ENCODE measurements at regions of chr1 and their contacts with region 1.

Region 1: DNA sequence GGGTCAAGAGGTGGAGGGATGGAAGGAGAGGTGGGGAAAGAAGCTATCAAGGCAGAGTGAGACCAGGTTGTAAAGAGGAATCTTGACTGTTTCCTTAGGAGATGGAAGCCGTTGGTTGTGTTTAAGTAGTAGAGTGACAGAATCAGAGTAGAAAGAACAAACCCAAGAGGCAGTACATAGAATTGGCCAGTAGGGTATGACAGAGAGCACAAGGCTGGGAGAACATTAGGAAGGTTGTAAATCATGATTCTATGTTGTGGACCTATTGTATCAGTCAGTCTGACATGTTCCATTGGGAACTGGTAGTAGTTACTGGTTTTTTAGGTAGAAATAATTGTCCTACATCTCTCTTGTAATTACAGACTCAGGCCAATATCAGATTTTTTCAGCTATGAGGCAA is 486.9 kb upstream of the USP24 start:
- DNase-seq: peak; percentile 44
- H3K4me3 ChIP-seq: no peak overlapping the region
- H3K27ac ChIP-seq: no peak overlapping the region
- H3K4me1 ChIP-seq: peaks cover 39% of the 10 kb centered on the region
- H3K27me3 ChIP-seq: no peaks in the 10 kb centered on the region

Region 2: DNA sequence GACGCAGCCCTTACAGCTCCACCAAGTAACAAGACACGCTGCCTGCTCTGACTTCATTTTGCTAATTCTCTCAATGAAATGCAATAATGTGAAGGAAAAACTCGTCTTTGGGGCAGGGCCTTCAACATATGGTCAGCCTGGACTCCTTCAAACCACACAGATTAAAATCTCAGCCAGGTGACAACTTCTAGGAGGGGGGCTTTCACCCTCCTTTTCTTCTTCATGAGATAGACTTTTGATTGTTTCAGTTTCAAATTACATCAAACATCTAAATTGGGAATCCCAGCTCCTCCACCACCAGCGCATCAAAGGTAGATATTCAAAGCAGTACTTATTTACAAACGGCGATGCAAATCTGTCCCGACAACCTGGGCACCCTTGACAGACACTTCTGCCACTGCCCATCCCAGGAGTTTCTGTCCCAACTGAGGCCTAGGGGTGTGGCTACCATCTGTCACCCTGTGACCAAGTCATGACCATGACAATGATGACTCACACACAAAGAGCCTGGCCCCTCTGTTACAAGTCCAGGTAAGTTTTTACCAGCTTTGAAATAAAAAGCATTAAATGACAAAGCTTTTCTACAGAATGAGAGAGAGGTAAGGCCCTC is 1325.5 kb before region 1 on chr1:
- in situ Hi-C with region 1: no loop called
- DNase-seq: no peak
- H3K4me3 ChIP-seq: no peak overlapping the region
- H3K27ac ChIP-seq: no peak overlapping the region
- H3K4me1 ChIP-seq: peaks cover 7% of the 10 kb centered on the region; the same call in 1 of the 2 replicates
- H3K27me3 ChIP-seq: no peaks in the 10 kb centered on the region

Region 3: DNA sequence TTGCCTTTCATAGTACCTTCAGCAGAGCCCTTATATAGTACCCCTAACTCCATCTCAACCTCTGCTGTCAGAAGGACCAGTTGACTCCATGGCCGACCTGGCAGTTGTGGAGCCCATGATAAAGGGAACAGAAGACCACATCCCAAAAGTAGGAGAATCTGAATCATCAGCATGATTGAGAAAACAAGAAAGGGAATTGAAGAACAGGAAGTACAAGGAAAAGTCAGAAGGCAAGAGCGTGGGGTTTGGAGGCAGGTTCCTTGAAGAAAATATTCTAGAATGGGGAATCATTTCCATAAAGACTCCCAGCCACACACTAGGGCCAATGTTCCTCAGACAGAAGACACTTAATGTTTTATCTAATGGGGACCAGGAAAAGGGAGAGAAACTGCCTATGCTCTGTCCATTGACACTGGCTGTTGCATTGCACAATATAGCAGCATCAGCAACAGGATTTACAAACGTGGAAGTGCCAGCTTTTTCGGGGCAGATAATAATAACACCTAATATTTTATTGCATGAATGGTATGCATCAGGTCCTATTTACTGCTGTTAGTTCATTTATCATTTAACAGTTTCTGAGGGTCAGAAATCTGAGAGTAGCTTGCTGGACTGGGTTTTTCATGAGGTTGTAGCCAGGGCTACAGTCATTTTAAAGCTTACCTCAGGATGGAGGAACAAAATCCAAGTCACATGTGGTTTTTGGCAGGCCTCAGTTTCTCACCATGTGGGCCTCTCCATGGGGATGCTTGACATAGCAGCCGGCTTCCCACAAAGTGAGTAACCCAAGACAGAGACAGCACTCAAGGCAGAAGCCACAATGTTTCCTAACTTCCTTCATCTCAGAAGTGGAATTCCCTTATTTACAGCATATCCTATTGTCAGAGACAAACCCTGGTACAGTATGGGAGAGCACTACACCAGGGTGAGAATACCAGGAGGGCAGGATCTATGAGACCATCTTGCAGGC is 393.9 kb after region 1 on chr1:
- in situ Hi-C with region 1: loop called (anchors 25 kb)
- DNase-seq: peak; percentile 97
- H3K4me3 ChIP-seq: no peak overlapping the region
- H3K27ac ChIP-seq: peak overlapping the region; percentile 79
- H3K4me1 ChIP-seq: peaks cover 73% of the 10 kb centered on the region
- H3K27me3 ChIP-seq: no peaks in the 10 kb centered on the region

Region 4: GRCh38 chr1:56578963-56579875 is 877.2 kb after region 1 on chr1 and contains the start of gene PLPP3:
- in situ Hi-C with region 1: loop called (anchors 25 kb)
- DNase-seq: peak; percentile 95
- H3K4me3 ChIP-seq: peak within 1 kb of the TSS; percentile 89
- H3K27ac ChIP-seq: peak within 1 kb of the TSS; percentile 75
- H3K4me1 ChIP-seq: peaks cover 19% of the 10 kb centered on the region
- H3K27me3 ChIP-seq: no peaks in the 10 kb centered on the region
- total RNA-seq, gene PLPP3: 156 and 159 TPM in 2 replicates

Measured in GM23248 (cell line).